Left cardiac atrium (tissue), 4 donors: ENCODE measurements at regions of chr10 and their contacts with region 1.

Region 1: DNA sequence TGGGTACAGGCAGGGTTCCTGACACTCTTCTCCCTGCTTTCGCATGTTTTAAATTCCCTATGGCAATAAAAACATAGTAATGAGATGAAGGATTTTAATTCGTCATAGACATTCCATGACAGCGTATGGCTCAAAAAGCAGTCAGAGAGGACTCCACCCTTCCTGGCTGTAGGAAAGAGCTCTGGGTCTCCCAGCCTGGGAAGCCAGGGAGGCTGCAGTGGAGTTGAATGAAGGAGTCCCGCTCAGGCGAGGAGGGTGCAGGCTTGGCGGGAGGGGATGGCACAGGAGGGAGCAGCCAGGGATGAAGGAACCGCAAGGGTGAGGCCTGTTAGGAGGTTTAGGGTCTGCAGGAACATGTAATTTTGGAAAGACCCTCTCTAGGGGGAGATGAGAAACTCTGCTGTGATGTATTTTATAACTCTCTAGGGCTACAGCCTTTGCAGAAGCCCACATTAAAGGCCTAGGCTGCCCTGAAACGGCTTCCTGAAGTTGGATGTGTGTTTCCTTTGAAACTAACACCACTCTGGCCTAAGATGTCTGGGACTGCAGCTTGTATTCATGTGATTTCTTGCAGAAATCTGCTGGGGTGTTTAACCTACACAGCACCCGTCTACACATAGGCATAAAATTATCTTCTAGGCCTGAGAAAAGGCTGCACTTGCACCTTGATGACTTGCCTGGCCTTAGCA is 7.6 kb upstream of the LARP4B start:
- DNase-seq: no peak
- ATAC-seq: no peak

Region 2: GRCh38 chr10:788796-789748 is 150.1 kb before region 1 on chr10:
- intact Hi-C with region 1: no loop called
- DNase-seq: no peak
- ATAC-seq: peak; percentile 69 to 92

Region 3: GRCh38 chr10:984040-984638 is 45.0 kb after region 1 on chr10:
- intact Hi-C with region 1: loop called in 1 of 2 experiments (anchors 5 kb)
- DNase-seq: no peak
- ATAC-seq: no peak